Activated naive CD4-positive, alpha-beta T cell treated with anti-CD3 and anti-CD28 coated beads for 36 hours (primary cell): ENCODE measurements at regions of chr11 and their contacts with region 1.

Region 1: GRCh38 chr11:32792948-32793475 is 1.4 kb downstream of the CCDC73 start:
- DNase-seq: peak; percentile 84
- H3K4me3 Mint-ChIP-seq: no peak overlapping the region
- H3K27ac Mint-ChIP-seq: no peak overlapping the region
- H3K4me1 Mint-ChIP-seq: peaks cover 9% of the 10 kb centered on the region
- H3K27me3 Mint-ChIP-seq: peaks cover 1% of the 10 kb centered on the region

Region 2: DNA sequence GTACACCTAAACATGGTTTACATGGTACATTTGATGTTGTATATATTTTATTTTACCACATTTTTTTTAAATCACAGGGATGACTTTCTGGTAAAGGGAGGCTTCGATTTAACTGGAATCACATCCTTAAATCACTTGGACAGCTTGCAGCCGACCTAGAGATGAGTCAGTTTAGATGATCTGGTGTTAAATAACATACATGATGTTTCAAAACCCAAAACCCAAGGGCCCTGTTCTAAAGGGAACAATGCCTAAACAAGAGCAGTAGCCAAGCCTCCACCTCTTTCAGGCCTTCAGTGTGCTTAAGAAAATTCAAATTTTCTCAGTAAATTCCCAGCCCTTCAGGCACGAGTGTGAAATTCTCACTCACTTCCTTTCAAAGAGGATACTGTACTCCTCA is 466.5 kb before region 1 on chr11:
- CTCF ChIA-PET with region 1: interaction called, 6 read pairs
- intact Hi-C with region 1: loop called (anchors 1 kb)
- DNase-seq: no peak
- H3K4me3 Mint-ChIP-seq: no peak overlapping the region
- H3K27ac Mint-ChIP-seq: no peak overlapping the region
- H3K4me1 Mint-ChIP-seq: no peaks in the 10 kb centered on the region
- H3K27me3 Mint-ChIP-seq: peaks cover 17% of the 10 kb centered on the region

Region 3: DNA sequence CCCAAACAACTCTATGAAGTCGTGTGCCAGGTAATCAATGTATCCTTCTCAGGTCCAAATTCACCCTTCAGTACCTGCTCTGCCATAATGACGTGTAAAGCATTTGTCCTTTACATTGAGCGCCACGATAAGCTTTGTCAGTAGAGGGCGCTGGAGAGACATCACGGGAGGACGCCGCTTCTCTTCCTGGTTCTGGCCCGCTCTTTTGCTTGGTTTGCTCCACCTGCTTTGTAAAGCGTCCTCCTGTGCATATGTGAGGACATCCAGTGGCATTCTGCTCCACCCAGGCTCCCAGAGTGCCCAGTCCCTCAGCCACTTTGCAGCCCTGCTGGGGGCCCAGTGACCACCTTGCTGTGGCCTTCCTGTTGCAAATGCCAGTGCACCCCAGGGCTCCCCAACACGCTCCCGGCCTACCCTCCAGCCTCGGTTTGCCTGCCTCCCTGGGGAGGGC is 418.7 kb before region 1 on chr11:
- CTCF ChIA-PET with region 1: interaction called, 4 read pairs
- intact Hi-C with region 1: loop called (anchors 1 kb)
- DNase-seq: peak; percentile 67
- H3K4me3 Mint-ChIP-seq: no peak overlapping the region
- H3K27ac Mint-ChIP-seq: peak overlapping the region; percentile 11
- H3K4me1 Mint-ChIP-seq: no peaks in the 10 kb centered on the region
- H3K27me3 Mint-ChIP-seq: peaks cover 6% of the 10 kb centered on the region

Region 4: GRCh38 chr11:32405592-32405991 is 387.4 kb before region 1 on chr11:
- CTCF ChIA-PET with region 1: no interaction called
- intact Hi-C with region 1: loop called (anchors 2 kb)
- DNase-seq: no peak
- H3K4me3 Mint-ChIP-seq: no peak overlapping the region
- H3K27ac Mint-ChIP-seq: no peak overlapping the region
- H3K4me1 Mint-ChIP-seq: no peaks in the 10 kb centered on the region
- H3K27me3 Mint-ChIP-seq: peaks cover 15% of the 10 kb centered on the region

Region 5: GRCh38 chr11:32435511-32435941 is 357.5 kb before region 1 on chr11 and contains the start of gene WT1:
- CTCF ChIA-PET with region 1: interaction called, 3 read pairs
- intact Hi-C with region 1: loop called (anchors 10 kb)
- DNase-seq: no peak
- H3K4me3 Mint-ChIP-seq: peak within 1 kb of the TSS; percentile 61
- H3K27ac Mint-ChIP-seq: no peak within 1 kb of the TSS
- H3K4me1 Mint-ChIP-seq: peaks cover 43% of the 10 kb centered on the region
- H3K27me3 Mint-ChIP-seq: peaks cover 75% of the 10 kb centered on the region
- total RNA-seq, gene WT1: not detected

Region 6: GRCh38 chr11:32713496-32713895 is 79.5 kb before region 1 on chr11:
- CTCF ChIA-PET with region 1: interaction called, 6 read pairs
- intact Hi-C with region 1: loop called (anchors 1 kb)
- DNase-seq: peak; percentile 23
- H3K4me3 Mint-ChIP-seq: no peak overlapping the region
- H3K27ac Mint-ChIP-seq: no peak overlapping the region
- H3K4me1 Mint-ChIP-seq: no peaks in the 10 kb centered on the region
- H3K27me3 Mint-ChIP-seq: peaks cover 22% of the 10 kb centered on the region

Region 7: GRCh38 chr11:32729976-32730375 is 63.0 kb before region 1 on chr11:
- CTCF ChIA-PET with region 1: no interaction called
- intact Hi-C with region 1: no loop called
- DNase-seq: no peak
- H3K4me3 Mint-ChIP-seq: no peak overlapping the region
- H3K27ac Mint-ChIP-seq: no peak overlapping the region
- H3K4me1 Mint-ChIP-seq: no peaks in the 10 kb centered on the region
- H3K27me3 Mint-ChIP-seq: peaks cover 10% of the 10 kb centered on the region

Region 8: DNA sequence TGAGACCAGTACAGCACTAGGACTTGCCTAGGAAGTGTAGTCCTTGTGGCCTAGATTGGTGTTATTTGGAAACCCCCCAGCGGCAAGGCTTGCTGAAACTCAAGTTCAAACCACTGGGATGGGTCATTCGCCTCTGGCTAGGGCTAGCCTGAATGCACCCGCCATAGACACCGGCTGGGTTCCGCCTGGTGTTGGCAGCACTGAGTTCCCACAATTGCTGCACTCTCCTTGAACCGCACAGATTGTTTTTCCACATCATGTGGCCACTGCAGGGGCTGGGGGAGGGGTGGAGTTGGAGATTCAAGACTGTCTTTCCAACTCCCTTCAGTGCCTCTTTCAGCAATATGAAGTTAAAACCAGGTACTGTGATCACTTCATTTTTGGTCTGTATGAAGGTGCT is 41.6 kb before region 1 on chr11:
- CTCF ChIA-PET with region 1: no interaction called
- intact Hi-C with region 1: loop called (anchors 5 kb)
- DNase-seq: no peak
- H3K4me3 Mint-ChIP-seq: no peak overlapping the region
- H3K27ac Mint-ChIP-seq: no peak overlapping the region
- H3K4me1 Mint-ChIP-seq: no peaks in the 10 kb centered on the region
- H3K27me3 Mint-ChIP-seq: peaks cover 10% of the 10 kb centered on the region

Region 9: GRCh38 chr11:33376331-33377310 is 583.6 kb after region 1 on chr11:
- CTCF ChIA-PET with region 1: no interaction called
- intact Hi-C with region 1: no loop called
- DNase-seq: no peak
- H3K4me3 Mint-ChIP-seq: no peak overlapping the region
- H3K27ac Mint-ChIP-seq: no peak overlapping the region
- H3K4me1 Mint-ChIP-seq: peaks cover 2% of the 10 kb centered on the region
- H3K27me3 Mint-ChIP-seq: peaks cover 47% of the 10 kb centered on the region